ENCODE measurements at regions of chr17 and their contacts with region 1.

Region 1: DNA sequence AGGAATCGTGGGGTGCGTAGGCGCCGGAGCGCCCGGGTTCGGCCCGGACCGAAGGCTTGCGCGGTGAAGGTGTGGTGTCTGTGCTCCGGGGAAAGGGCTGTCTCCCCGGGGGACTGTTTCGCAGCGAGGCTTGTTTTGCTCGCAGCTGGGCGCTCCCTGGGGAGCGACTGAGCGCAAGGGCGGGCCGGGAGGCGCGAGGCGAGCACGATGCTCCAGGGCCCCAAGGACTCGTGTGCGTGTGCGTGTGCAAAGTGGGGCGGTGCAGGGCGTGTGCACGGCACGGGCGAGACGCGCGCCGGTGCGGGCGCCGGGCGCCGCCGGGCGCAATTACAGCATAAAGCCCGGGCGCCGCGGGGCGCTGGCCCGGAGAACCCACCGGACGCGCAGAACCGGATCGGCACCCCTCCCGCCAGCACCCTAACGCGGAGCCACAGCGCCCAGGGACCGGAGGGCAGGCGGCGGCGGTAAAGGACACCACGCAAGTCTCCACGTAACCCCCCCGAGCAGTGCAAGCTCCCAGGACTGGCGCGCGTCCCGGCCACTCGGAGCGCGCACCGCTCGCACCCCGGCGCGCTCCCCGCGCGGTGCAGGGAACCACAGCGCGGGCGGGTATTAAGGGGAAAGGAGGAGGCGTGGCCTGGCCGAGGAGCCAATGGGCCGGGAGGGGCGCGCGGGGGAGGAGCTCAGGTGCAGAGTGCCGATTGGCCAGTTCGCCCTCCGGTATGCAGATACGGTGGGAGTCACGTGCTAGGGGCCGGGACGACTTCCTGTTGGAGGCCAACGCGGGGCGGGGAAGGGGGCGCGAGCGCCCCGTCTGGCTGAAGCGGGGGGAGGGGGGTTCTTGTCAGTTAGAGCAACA is at the start of gene TNRC6C:
- H3K4me3 ChIP-seq: peak within 1 kb of the TSS; percentile 79
- H3K27ac ChIP-seq: peak within 1 kb of the TSS; percentile 89; the same call in 1 of the 2 replicates
- H3K4me1 ChIP-seq: peaks cover 16% of the 10 kb centered on the region
- CTCF ChIP-seq: peak; percentile 45; the same call in 1 of the 2 replicates

Region 2: GRCh38 chr17:77708936-77709335 is 249.2 kb before region 1 on chr17:
- CTCF ChIA-PET with region 1: no interaction called
- POLR2A ChIA-PET with region 1: interaction called, 12 read pairs
- H3K4me3 ChIP-seq: no peak overlapping the region
- H3K27ac ChIP-seq: no peak overlapping the region
- H3K4me1 ChIP-seq: no peaks in the 10 kb centered on the region
- CTCF ChIP-seq: no peak

Region 3: DNA sequence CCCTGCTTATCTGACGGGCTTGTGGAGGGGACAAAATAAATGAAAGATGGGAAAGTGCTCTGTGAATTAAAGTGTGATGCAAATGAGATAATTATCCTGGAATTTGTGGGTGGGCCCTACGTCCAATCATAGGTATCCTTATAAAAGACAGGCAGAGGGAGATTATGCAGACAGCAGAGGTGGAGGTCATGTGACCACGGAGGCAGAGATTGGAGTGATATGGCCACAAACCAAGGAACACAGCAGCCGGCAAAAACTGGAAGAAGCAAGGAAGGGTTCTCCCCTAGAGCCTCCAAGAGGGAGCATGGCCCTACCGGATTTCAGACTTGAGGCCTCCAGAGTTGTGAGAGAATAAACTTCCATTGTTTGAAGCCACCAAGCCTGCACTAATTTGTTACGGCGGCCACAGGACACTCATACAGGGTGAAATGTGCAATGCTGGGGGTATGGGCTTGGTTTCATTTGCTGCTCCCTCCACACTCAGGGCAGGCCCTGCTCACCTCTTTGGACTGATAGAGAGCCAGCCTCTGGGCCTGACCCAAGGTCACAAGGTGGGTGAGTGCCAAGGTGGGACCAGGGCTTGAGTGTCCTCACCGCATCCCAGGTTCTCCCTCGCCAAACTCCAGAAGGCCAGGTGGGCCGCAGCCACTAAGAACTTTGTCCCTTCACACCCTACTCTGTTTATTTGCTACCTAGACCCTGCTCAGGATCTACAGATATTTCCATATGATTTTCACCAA is 149.2 kb before region 1 on chr17:
- CTCF ChIA-PET with region 1: no interaction called
- POLR2A ChIA-PET with region 1: no interaction called
- H3K4me3 ChIP-seq: no peak overlapping the region
- H3K27ac ChIP-seq: no peak overlapping the region
- H3K4me1 ChIP-seq: no peaks in the 10 kb centered on the region
- CTCF ChIP-seq: no peak

Region 4: DNA sequence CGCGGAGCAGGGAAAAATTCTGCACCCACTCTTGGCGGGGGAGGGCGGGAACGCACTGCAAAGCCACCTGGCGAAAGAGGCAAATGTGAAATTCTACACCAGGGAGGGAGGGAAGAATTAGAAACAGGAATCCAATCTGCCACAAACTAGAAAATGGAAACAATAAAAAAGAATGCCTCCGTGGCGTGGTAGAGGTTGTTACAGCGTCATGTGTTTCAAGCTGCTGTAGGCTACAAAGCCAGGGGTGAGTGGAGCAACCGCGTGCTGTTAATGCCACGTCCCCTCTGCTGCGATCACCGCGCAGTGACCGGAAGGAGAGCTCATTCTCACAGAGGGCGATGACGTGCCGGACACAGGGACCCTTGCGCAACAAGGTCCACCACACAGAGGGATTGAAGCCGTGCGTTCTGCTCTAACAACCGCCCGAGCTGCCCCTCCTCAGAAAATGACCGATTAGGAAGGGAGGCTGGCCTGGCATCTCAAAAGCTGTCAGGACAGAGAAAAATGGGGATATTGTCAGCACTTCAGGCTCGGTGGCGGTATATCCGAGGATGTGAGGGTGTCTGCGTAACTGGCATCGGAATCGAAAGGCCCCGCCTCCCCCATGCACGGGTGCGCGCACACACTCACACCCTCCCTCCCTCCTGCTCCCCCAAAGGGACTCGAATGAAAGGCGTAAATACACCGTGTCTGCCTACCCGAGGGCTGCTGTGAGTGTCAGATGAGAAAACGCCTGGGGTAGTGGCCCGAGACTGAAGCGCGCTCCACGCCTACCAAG is 70.4 kb before region 1 on chr17:
- CTCF ChIA-PET with region 1: interaction called, 5 read pairs
- POLR2A ChIA-PET with region 1: interaction called, 17 read pairs
- H3K4me3 ChIP-seq: peak overlapping the region; percentile 37
- H3K27ac ChIP-seq: no peak overlapping the region; the same call in 1 of the 2 replicates
- H3K4me1 ChIP-seq: 0 out of 2 replicates have a peak, but pooled peaks cover 5% of the 10 kb centered on the region
- CTCF ChIP-seq: no peak

Region 5: GRCh38 chr17:77926981-77927380 is 31.1 kb before region 1 on chr17:
- CTCF ChIA-PET with region 1: no interaction called
- POLR2A ChIA-PET with region 1: interaction called, 25 read pairs
- H3K4me3 ChIP-seq: no peak overlapping the region
- H3K27ac ChIP-seq: no peak overlapping the region
- H3K4me1 ChIP-seq: peaks cover 6% of the 10 kb centered on the region
- CTCF ChIP-seq: no peak

Region 6: DNA sequence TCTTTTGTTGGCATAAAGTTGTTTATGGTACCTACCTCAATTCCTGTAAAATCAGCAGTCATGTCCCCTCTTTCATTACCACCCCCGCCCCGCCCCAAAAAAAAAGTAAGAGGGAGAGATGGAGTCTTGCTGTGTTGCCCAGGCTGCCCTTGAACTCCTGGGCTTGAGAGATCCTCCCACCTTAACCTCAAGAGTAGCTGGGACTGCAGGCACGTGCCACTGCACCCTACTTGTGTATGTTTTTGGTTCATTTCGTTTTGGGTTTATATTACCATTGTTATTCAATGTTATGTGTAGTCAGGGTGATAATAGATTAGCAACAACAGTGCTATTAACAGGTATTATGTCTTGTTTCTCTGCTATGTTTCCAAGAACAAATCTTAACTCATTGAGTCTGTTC is 16.3 kb after region 1 on chr17:
- CTCF ChIA-PET with region 1: interaction called, 6 read pairs
- POLR2A ChIA-PET with region 1: interaction called, 44 read pairs
- H3K4me3 ChIP-seq: no peak overlapping the region
- H3K27ac ChIP-seq: no peak overlapping the region
- H3K4me1 ChIP-seq: no peaks in the 10 kb centered on the region; the same call in 1 of the 2 replicates
- CTCF ChIP-seq: no peak

Region 7: DNA sequence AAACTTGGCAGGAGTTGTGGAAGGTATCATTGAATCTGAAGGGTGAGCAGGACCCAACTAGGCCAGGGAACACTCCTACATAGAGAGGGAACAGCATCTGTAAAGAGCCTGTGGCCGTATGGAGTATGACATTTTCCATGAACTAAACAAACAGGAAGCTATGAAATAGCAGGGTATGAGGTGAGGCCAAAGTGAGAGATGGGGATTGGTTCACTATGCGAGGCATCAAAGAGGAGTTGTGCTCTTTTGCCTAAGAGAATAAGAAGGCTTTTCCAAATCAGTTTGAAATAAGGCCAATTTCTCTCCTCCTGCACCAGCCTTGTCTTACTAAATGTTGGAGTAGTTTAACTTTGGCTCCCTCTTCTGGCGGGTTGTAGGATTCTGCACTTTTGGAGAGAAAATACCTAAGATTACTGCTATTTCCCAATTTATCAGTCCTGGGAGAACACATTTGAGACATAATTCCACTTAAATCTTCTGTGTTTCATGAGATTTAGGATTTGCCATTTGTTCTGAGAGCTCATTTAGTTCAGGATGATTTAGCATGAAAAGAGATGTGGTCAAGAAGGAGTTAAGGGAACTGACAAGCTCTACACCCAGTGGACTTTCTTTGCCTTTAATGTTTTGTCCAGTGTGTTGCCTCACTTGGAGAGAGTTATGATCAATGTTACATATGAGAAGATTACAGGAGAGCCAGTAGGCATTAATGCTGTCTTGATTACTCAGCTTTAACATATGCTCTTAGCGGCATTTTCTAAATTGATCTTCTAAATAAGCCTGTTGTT is 55.8 kb after region 1 on chr17:
- CTCF ChIA-PET with region 1: interaction called, 28 read pairs
- POLR2A ChIA-PET with region 1: interaction called, 51 read pairs
- H3K4me3 ChIP-seq: no peak overlapping the region
- H3K27ac ChIP-seq: no peak overlapping the region
- H3K4me1 ChIP-seq: no peaks in the 10 kb centered on the region
- CTCF ChIP-seq: peak; percentile 51

Region 8: GRCh38 chr17:78048346-78049292 is 90.5 kb after region 1 on chr17:
- CTCF ChIA-PET with region 1: no interaction called
- POLR2A ChIA-PET with region 1: no interaction called
- H3K4me3 ChIP-seq: no peak overlapping the region
- H3K27ac ChIP-seq: no peak overlapping the region
- H3K4me1 ChIP-seq: no peaks in the 10 kb centered on the region
- CTCF ChIP-seq: no peak

Region 9: GRCh38 chr17:78120971-78121800 is 163.1 kb after region 1 on chr17:
- CTCF ChIA-PET with region 1: no interaction called
- POLR2A ChIA-PET with region 1: no interaction called
- H3K4me3 ChIP-seq: no peak overlapping the region
- H3K27ac ChIP-seq: no peak overlapping the region
- H3K4me1 ChIP-seq: no peaks in the 10 kb centered on the region
- CTCF ChIP-seq: no peak

Region 10: GRCh38 chr17:78154903-78155811 is 197.1 kb after region 1 on chr17:
- CTCF ChIA-PET with region 1: no interaction called
- POLR2A ChIA-PET with region 1: no interaction called
- H3K4me3 ChIP-seq: no peak overlapping the region
- H3K27ac ChIP-seq: no peak overlapping the region
- H3K4me1 ChIP-seq: no peaks in the 10 kb centered on the region
- CTCF ChIP-seq: no peak